HCT116 (cell line): ENCODE measurements at regions of chr6 and their contacts with region 1.

Region 1: GRCh38 chr6:8983188-8983688 is 547.9 kb upstream of the SLC35B3 start:
- DNase-seq: peak; percentile 61
- ATAC-seq: peak; percentile 98
- H3K4me3 ChIP-seq: no peak overlapping the region
- H3K27ac ChIP-seq: no peak overlapping the region
- H3K4me1 ChIP-seq: peaks cover 0 to 5% of the 10 kb centered on the region in 2 experiments; a peak in 1 of 4 replicates
- H3K27me3 ChIP-seq: no peaks in the 10 kb centered on the region
- CTCF ChIP-seq: peak; percentile 91 to 98 (median 91)
- POLR2A ChIP-seq: no peak
- RAD21 ChIP-seq: peak; percentile 91

Region 2: DNA sequence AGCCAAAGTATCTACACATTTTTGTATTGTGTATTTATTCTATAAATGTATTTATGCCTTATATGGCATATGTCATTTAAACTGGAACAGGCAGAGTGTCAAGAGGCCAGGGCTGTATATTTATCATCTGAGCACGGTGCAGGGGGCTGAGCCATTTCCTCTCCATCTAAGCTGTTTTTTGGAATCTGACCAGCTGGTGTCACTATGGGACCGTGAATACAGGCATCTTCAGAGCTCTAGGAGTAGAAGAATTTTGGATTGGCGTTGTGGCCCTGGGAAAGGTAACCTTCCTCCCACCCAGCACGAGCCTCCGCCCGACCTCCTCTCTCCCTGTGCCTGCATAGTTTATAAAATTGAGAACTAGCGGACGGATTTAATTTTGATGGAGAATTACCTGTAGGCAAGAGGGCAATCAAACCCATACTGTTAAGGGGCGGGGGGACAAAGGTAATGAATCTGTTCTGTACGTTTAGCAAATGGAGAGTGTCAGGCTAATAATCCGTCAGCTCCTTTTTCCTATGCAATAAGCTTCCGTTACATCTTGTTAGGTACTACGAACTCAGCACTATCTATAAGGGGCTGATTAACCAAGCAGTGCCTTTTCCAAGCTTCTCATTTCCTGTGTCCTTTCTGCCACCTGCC is 851.9 kb before region 1 on chr6:
- CTCF ChIA-PET with region 1: interaction called, 4 read pairs
- POLR2A ChIA-PET with region 1: no interaction called
- RAD21 ChIA-PET with region 1: no interaction called
- intact Hi-C with region 1: loop called (anchors 10 kb)
- DNase-seq: peak; percentile 61
- ATAC-seq: peak; percentile 98
- H3K4me3 ChIP-seq: no peak overlapping the region
- H3K27ac ChIP-seq: no peak overlapping the region
- H3K4me1 ChIP-seq: peaks cover 0 to 2% of the 10 kb centered on the region in 2 experiments; a peak in 1 of 4 replicates
- H3K27me3 ChIP-seq: 0 out of 2 replicates have a peak, but pooled peaks cover 5% of the 10 kb centered on the region
- CTCF ChIP-seq: peak; percentile 47 to 71 (median 69)
- POLR2A ChIP-seq: no peak
- RAD21 ChIP-seq: peak; percentile 92

Region 3: DNA sequence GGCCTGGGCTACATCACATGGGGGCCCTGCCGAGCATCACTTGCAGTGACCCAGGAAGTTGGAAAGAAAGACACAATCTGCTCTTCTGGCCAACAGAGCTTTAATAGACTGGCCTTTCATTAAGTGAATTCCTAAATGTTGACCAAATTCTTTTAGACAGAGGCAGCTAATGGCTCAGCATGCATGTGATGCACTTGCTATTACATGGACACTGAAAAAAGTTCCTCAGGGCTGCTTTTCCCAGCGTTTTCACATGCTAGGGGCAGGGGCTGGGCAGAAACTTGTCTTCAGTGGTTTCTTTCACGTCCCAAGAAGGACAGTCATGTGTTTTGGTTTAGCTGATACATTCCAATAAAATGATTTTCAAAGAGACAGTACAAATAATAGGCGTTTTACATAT is 103.1 kb after region 1 on chr6:
- CTCF ChIA-PET with region 1: no interaction called
- POLR2A ChIA-PET with region 1: no interaction called
- RAD21 ChIA-PET with region 1: no interaction called
- intact Hi-C with region 1: no loop called
- DNase-seq: no peak
- ATAC-seq: no peak
- H3K4me3 ChIP-seq: no peak overlapping the region
- H3K27ac ChIP-seq: no peak overlapping the region
- H3K4me1 ChIP-seq: no peaks in the 10 kb centered on the region
- H3K27me3 ChIP-seq: no peaks in the 10 kb centered on the region
- CTCF ChIP-seq: no peak
- POLR2A ChIP-seq: no peak
- RAD21 ChIP-seq: no peak

Region 4: GRCh38 chr6:9412951-9413559 is 429.8 kb after region 1 on chr6:
- CTCF ChIA-PET with region 1: no interaction called
- POLR2A ChIA-PET with region 1: no interaction called
- RAD21 ChIA-PET with region 1: no interaction called
- intact Hi-C with region 1: loop called (anchors 1 kb)
- DNase-seq: peak; percentile 34
- ATAC-seq: peak; percentile 99
- H3K4me3 ChIP-seq: no peak overlapping the region
- H3K27ac ChIP-seq: no peak overlapping the region
- H3K4me1 ChIP-seq: no peaks in the 10 kb centered on the region
- H3K27me3 ChIP-seq: no peaks in the 10 kb centered on the region
- CTCF ChIP-seq: peak; percentile 47 to 85 (median 80); a peak in 5 of 6 replicates
- POLR2A ChIP-seq: no peak
- RAD21 ChIP-seq: peak; percentile 64

Region 5: DNA sequence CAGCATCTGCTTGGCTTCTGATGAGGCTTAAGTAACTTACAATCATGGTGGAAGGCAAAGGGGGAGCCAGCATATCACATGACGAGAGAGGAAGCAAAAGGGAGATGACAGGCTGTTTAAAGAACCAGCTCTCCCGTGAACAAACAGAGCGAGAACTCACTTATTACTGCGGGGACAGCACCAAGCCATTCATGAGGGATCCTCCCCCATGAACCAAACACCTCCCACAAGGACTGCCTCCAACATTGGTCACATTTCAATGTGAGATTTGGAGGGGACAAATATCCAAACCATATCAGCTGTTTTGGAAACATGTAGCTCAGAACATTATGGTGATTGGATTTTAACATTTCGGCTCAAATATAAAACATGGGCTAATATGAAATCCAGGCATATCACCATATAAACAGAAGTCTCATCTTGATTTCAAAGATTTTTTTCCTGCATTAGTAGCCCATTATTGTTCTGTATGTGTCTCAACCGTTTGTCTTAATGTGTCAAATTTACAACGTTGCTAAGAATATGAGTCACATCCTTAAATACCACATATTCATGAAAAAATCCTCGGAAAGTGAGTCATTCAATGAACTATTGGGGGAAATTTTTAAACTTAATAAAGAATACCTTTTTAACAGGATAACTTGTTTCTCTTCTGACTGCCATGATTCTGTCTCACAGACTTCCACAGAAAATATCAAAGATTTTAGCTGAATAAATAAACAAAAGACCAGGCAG is 537.3 kb after region 1 on chr6:
- CTCF ChIA-PET with region 1: no interaction called
- POLR2A ChIA-PET with region 1: no interaction called
- RAD21 ChIA-PET with region 1: no interaction called
- intact Hi-C with region 1: loop called (anchors 10 kb)
- DNase-seq: peak; percentile 35
- ATAC-seq: peak; percentile 71
- H3K4me3 ChIP-seq: peak overlapping the region in 1 of 2 experiments; percentile 8; a peak in 2 of 4 replicates
- H3K27ac ChIP-seq: no peak overlapping the region; the same call in 1 of the 2 replicates
- H3K4me1 ChIP-seq: peaks cover 28 to 40% of the 10 kb centered on the region in 2 experiments
- H3K27me3 ChIP-seq: no peaks in the 10 kb centered on the region
- CTCF ChIP-seq: no peak
- POLR2A ChIP-seq: no peak
- RAD21 ChIP-seq: no peak